Transverse colon (tissue), 4 donors: ENCODE measurements at regions of chr4 and their contacts with region 1.

Region 1: DNA sequence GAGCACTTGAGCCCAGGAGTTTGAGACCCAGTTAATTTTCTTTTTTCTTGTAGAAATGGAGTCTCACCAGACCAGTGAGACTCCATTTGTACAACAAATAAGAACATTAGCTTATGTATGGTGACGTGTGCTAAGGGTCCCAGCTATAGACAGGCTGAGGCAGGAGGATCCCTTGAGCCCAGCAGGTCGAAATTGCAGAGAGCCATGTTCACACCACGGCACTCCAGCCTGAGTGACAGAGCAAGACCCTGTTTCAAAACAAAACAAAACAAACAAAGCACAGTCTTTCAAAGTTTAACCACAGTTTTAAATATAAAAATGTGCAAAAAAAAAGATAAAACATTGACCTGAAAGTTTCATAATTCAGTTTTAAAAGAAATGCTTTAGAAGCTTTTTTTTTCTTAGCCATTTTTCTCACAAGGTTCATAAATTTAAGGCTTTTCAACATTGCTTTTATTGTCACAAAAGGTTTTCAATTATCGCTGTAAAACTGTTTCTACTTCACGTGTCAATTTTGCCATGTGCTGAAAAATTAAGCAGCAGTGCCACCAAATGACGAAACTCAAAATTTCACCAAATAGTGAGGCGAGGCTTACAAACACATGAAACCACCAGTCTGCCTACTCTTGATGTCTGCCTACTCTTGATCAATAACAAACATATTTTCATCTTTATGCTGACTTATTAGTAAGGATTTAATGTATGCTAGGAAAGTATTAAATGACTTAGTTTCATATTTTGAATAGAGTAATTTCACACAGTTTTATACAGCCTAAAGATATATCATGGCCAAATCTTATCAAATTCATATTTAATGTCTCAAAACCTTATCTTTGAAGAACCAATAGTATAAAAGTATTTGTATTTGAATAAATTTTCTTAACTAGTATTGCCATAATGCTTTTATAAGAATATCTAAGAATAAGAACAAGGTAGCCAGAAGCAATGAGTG is 126.3 kb downstream of the NEK1 start:
- DNase-seq: peak; percentile 26
- H3K4me3 ChIP-seq: no peak overlapping the region
- H3K27ac ChIP-seq: no peak overlapping the region
- H3K4me1 ChIP-seq: peaks cover 0 to 6% (median 0%) of the 10 kb centered on the region in 4 donors
- H3K27me3 ChIP-seq: no peaks in the 10 kb centered on the region
- CTCF ChIP-seq: peak; percentile 29 to 57 (median 45)
- EP300 ChIP-seq: no peak
- POLR2A ChIP-seq: no peak

Region 2: GRCh38 chr4:168514249-168514852 is 971.7 kb before region 1 on chr4:
- in situ Hi-C with region 1: loop called in 1 of 4 experiments (anchors 25 kb)
- intact Hi-C with region 1: no loop called
- DNase-seq: no peak
- H3K4me3 ChIP-seq: no peak overlapping the region
- H3K27ac ChIP-seq: no peak overlapping the region
- H3K4me1 ChIP-seq: no peaks in the 10 kb centered on the region
- H3K27me3 ChIP-seq: no peaks in the 10 kb centered on the region
- CTCF ChIP-seq: peak; percentile 43 to 51 (median 45)
- EP300 ChIP-seq: no peak
- POLR2A ChIP-seq: no peak

Region 3: GRCh38 chr4:168923526-168924194 is 562.4 kb before region 1 on chr4:
- in situ Hi-C with region 1: loop called (anchors 5 to 25 kb)
- intact Hi-C with region 1: loop called (anchors 10 kb)
- DNase-seq: peak; percentile 54
- H3K4me3 ChIP-seq: no peak overlapping the region
- H3K27ac ChIP-seq: peak overlapping the region in 2 of 4 donors; percentile 6 to 18
- H3K4me1 ChIP-seq: no peaks in the 10 kb centered on the region
- H3K27me3 ChIP-seq: no peaks in the 10 kb centered on the region
- CTCF ChIP-seq: peak; percentile 66 to 82 (median 73)
- EP300 ChIP-seq: no peak
- POLR2A ChIP-seq: no peak

Region 4: GRCh38 chr4:168942985-168943384 is 543.1 kb before region 1 on chr4:
- in situ Hi-C with region 1: loop called in 1 of 4 experiments (anchors 25 kb)
- intact Hi-C with region 1: no loop called
- DNase-seq: no peak
- H3K4me3 ChIP-seq: no peak overlapping the region
- H3K27ac ChIP-seq: no peak overlapping the region
- H3K4me1 ChIP-seq: no peaks in the 10 kb centered on the region
- H3K27me3 ChIP-seq: no peaks in the 10 kb centered on the region
- CTCF ChIP-seq: peak in 4 of 5 experiments; percentile 12 to 45 (median 35)
- EP300 ChIP-seq: no peak
- POLR2A ChIP-seq: no peak

Region 5: DNA sequence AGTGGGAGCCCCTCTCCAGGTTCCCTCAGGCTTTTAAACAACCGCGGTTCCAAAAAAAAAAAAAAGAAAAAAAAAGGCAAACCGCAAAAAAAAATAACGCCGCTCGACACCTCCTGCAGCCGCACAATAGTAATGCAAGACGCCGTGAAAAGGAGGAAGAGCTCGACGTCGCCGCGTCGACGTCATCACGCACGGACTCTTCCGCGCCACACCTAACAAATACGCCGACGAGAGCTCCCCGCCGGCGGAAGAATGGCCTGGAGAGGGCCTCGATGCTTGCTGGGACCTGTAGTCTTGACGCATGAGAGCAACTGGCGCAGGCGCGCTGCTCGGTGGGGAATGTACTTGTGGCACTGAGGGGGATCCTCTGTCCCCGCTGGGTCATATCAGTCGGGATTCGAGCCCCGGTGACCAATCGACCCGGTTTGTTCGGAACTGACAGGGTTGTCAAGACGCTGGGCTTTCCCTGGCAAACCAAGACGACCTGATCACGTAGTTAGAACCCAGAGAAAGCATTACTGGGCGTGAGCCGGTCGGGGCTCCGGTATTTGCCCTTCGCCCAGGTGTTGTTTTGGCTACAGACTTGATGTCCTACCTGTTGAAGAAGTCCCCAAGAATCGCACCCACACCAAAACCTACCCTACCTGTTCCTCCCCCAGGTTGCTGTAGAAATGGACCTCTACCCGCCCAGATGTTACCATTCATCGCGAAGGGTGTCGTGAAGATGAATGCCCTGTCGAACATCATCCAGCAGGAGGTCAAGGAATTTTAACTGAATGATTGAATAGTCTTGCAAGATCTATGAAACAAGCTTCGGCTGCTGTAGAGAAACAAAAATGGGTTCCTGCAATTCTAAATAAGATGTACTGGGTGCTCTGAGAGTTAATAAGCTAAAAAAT is 475.7 kb before region 1 on chr4 and contains the start of gene CBR4:
- in situ Hi-C with region 1: loop called (anchors 10 to 25 kb)
- intact Hi-C with region 1: no loop called
- DNase-seq: peak; percentile 97
- H3K4me3 ChIP-seq: peak within 1 kb of the TSS; percentile 59 to 93 (median 69)
- H3K27ac ChIP-seq: peak within 1 kb of the TSS; percentile 95 to 100 (median 97)
- H3K4me1 ChIP-seq: peaks cover 17 to 47% (median 24%) of the 10 kb centered on the region in 4 donors
- H3K27me3 ChIP-seq: no peaks in the 10 kb centered on the region
- CTCF ChIP-seq: peak; percentile 22 to 84 (median 52)
- EP300 ChIP-seq: no peak
- POLR2A ChIP-seq: peak; percentile 91
- total RNA-seq, gene CBR4: 22.4 to 31.1 (median 26.2) TPM

Region 6: GRCh38 chr4:169115897-169116254 is 370.2 kb before region 1 on chr4:
- in situ Hi-C with region 1: loop called in 1 of 4 experiments (anchors 25 kb)
- intact Hi-C with region 1: no loop called
- DNase-seq: peak; percentile 19
- H3K4me3 ChIP-seq: no peak overlapping the region
- H3K27ac ChIP-seq: peak overlapping the region in 1 of 4 donors; percentile 51
- H3K4me1 ChIP-seq: peaks cover 0 to 25% (median 17%) of the 10 kb centered on the region in 4 donors
- H3K27me3 ChIP-seq: no peaks in the 10 kb centered on the region
- CTCF ChIP-seq: no peak
- EP300 ChIP-seq: no peak
- POLR2A ChIP-seq: no peak

Region 7: GRCh38 chr4:169311643-169312365 is 174.3 kb before region 1 on chr4:
- in situ Hi-C with region 1: loop called in 1 of 4 experiments (anchors 25 kb)
- intact Hi-C with region 1: no loop called
- DNase-seq: no peak
- H3K4me3 ChIP-seq: no peak overlapping the region
- H3K27ac ChIP-seq: peak overlapping the region in 1 of 4 donors; percentile 0
- H3K4me1 ChIP-seq: peaks cover 0 to 36% (median 23%) of the 10 kb centered on the region in 4 donors
- H3K27me3 ChIP-seq: no peaks in the 10 kb centered on the region
- CTCF ChIP-seq: peak; percentile 34 to 52 (median 46)
- EP300 ChIP-seq: no peak
- POLR2A ChIP-seq: no peak

Region 8: GRCh38 chr4:171266671-171267070 is 1780.6 kb after region 1 on chr4:
- in situ Hi-C with region 1: no loop called
- intact Hi-C with region 1: no loop called
- DNase-seq: no peak
- H3K4me3 ChIP-seq: no peak overlapping the region
- H3K27ac ChIP-seq: no peak overlapping the region
- H3K4me1 ChIP-seq: no peaks in the 10 kb centered on the region
- H3K27me3 ChIP-seq: no peaks in the 10 kb centered on the region
- CTCF ChIP-seq: no peak
- EP300 ChIP-seq: no peak
- POLR2A ChIP-seq: no peak